Right ventricle myocardium inferior (tissue), 1 donor: ENCODE measurements at regions of chr13 and their contacts with region 1.

Region 1: GRCh38 chr13:114226699-114227323 is 7.9 kb upstream of the CDC16 start:
- DNase-seq: peak; percentile 87
- ATAC-seq: peak; percentile 84

Region 2: DNA sequence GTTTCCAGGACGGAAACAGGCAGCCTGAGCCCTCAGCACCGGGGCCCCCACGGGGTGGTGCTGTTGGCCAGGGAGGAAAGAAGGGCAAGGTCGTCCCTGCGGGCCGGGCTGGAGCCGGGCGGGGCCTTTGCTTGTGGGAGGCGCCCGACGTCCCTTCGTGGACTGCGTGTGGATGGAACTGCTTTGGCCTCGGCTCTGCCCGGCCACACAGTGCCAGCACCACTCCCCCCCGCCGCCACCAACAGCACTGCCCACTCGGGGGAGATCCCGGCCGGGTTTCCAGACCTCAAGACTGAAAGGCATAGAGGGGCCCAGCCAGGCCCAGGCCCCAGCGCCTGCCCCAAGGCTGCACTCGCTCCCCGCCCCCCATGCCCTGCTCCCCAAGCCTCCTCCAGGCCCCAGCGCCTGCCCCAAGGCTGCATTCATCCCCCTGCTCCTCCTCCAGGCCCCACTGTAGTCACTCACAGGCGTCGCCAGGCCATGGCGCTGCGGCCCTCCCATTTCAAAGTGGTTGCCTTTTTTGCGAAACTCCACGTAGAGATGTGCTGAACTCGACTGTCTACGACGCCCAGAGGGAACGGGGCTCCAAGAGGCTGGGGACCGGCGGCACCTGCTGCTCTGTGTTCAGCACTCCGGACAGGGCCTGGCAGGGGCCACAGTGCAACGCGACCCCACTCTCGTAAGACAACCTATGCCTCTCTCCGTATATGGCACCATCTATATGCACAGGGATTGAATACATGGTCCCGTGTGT is 275.4 kb before region 1 on chr13:
- intact Hi-C with region 1: loop called (anchors 1 kb)
- DNase-seq: peak; percentile 93
- ATAC-seq: peak; percentile 95

Region 3: GRCh38 chr13:114128624-114129522 is 97.9 kb before region 1 on chr13:
- intact Hi-C with region 1: loop called (anchors 2 kb)
- DNase-seq: peak; percentile 93
- ATAC-seq: peak; percentile 51

Region 4: DNA sequence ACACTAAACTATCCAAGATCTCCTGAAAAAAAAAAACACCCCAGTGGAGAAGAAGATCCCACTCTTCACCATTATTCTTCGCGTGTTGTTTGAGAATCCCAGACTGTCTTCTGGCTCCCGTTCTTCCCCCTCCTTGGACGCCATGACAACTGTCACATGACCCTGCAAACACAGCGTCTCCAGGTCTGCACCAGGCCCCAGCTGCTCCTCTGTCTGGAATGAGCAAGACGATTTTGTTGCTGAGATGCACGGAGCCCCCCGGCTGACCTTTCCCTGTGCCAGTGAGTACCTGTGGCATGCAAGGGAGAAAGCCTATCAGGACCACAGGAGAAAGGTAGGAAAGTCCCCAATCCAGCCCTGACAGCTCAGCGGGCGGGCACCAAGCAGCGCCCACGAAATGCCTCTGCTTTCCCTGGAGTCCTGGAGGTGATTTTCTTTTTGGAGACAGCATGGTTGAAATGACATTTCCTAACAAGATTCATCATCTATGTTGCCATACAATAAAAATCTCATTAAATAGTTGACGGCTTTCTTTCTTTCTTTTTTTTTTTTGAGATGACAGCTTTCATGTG is 47.6 kb before region 1 on chr13 and contains the start of gene CFAP97D2:
- intact Hi-C with region 1: no loop called
- DNase-seq: no peak
- ATAC-seq: no peak
- total RNA-seq, gene CFAP97D2: not detected